Activated CD4-positive, alpha-beta memory T cell treated with anti-CD3 and anti-CD28 coated beads for 36 hours (primary cell): ENCODE measurements at regions of chr10 and their contacts with region 1.

Region 1: GRCh38 chr10:110918643-110919363 is at the start of gene BBIP1:
- DNase-seq: no peak
- H3K4me3 Mint-ChIP-seq: peak within 1 kb of the TSS; percentile 92
- H3K27ac Mint-ChIP-seq: peak within 1 kb of the TSS; percentile 99
- H3K4me1 Mint-ChIP-seq: peaks cover 39% of the 10 kb centered on the region
- H3K27me3 Mint-ChIP-seq: no peaks in the 10 kb centered on the region
- total RNA-seq, gene BBIP1: 36.4 to 43.9 TPM

Region 2: GRCh38 chr10:110304780-110305421 is 613.9 kb before region 1 on chr10 and contains the start of gene SMNDC1:
- CTCF ChIA-PET with region 1: no interaction called
- POLR2A ChIA-PET with region 1: no interaction called
- intact Hi-C with region 1: loop called (anchors 1 kb)
- DNase-seq: peak; percentile 99
- H3K4me3 Mint-ChIP-seq: peak within 1 kb of the TSS; percentile 93
- H3K27ac Mint-ChIP-seq: peak within 1 kb of the TSS; percentile 97
- H3K4me1 Mint-ChIP-seq: peaks cover 49% of the 10 kb centered on the region
- H3K27me3 Mint-ChIP-seq: no peaks in the 10 kb centered on the region
- total RNA-seq, gene SMNDC1: 44.1 to 48.3 TPM

Region 3: GRCh38 chr10:110556969-110557601 is 361.7 kb before region 1 on chr10:
- CTCF ChIA-PET with region 1: no interaction called
- POLR2A ChIA-PET with region 1: no interaction called
- intact Hi-C with region 1: no loop called
- DNase-seq: peak; percentile 80
- H3K4me3 Mint-ChIP-seq: no peak overlapping the region
- H3K27ac Mint-ChIP-seq: no peak overlapping the region
- H3K4me1 Mint-ChIP-seq: peaks cover 2% of the 10 kb centered on the region
- H3K27me3 Mint-ChIP-seq: peaks cover under 1% of the 10 kb centered on the region

Region 4: DNA sequence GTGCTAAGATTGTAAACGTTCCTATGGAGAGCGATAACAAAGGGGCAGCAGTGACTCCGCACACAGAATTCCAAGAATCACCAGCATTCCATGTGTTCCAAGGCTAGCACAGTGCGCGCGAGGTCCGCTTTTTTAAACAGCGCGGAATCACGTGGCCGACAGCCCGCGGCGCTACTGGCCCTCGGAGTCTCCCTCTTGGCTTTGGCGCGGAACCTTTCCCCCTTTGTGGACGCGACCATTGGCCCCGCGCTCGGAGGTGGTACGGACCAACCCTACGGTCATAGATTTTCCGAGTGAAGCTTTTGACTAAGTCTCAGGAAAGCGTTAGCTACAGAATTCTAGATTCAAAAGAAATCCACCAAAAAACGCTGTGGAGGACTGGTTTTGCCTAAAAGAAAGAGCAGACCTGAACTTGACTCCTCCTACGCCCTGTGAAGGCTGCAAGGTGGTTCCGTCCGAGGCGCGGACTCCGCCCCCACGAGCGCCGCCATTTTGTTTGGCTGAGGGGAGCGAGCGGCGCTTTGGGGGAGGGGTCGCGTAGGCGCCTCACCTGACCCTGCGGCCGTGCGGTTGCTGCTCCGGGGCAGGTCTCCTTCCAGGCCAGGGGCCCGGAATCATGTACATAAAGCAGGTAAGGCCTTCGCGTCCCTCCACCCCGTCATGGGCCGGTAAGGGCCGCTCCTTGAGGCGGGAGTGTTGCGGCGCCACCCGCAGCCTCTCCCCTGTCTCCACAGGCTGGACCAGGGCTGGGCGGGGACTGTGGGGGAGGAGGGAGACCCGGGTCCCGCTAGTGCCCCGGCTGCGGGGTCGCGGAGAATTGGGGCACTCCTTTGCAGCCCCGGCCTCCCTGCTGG is 351.4 kb before region 1 on chr10 and contains the start of gene SMC3:
- CTCF ChIA-PET with region 1: no interaction called
- POLR2A ChIA-PET with region 1: no interaction called
- intact Hi-C with region 1: loop called (anchors 1 kb)
- DNase-seq: peak; percentile 94
- H3K4me3 Mint-ChIP-seq: peak within 1 kb of the TSS; percentile 93
- H3K27ac Mint-ChIP-seq: peak within 1 kb of the TSS; percentile 97
- H3K4me1 Mint-ChIP-seq: peaks cover 43% of the 10 kb centered on the region
- H3K27me3 Mint-ChIP-seq: peaks cover 10% of the 10 kb centered on the region
- total RNA-seq, gene SMC3: 89.5 to 92.2 TPM

Region 5: GRCh38 chr10:110857265-110858158 is 61.3 kb before region 1 on chr10:
- CTCF ChIA-PET with region 1: no interaction called
- POLR2A ChIA-PET with region 1: interaction called, 11 read pairs
- intact Hi-C with region 1: no loop called
- DNase-seq: peak; percentile 66
- H3K4me3 Mint-ChIP-seq: peak overlapping the region; percentile 25
- H3K27ac Mint-ChIP-seq: peak overlapping the region; percentile 72
- H3K4me1 Mint-ChIP-seq: peaks cover 82% of the 10 kb centered on the region
- H3K27me3 Mint-ChIP-seq: no peaks in the 10 kb centered on the region

Region 6: GRCh38 chr10:110901954-110902819 is 16.6 kb before region 1 on chr10:
- CTCF ChIA-PET with region 1: interaction called, 14 read pairs
- POLR2A ChIA-PET with region 1: interaction called, 11 read pairs
- intact Hi-C with region 1: loop called (anchors 1 kb)
- DNase-seq: peak; percentile 68
- H3K4me3 Mint-ChIP-seq: peak overlapping the region; percentile 6
- H3K27ac Mint-ChIP-seq: peak overlapping the region; percentile 79
- H3K4me1 Mint-ChIP-seq: peaks cover 40% of the 10 kb centered on the region
- H3K27me3 Mint-ChIP-seq: no peaks in the 10 kb centered on the region

Region 7: DNA sequence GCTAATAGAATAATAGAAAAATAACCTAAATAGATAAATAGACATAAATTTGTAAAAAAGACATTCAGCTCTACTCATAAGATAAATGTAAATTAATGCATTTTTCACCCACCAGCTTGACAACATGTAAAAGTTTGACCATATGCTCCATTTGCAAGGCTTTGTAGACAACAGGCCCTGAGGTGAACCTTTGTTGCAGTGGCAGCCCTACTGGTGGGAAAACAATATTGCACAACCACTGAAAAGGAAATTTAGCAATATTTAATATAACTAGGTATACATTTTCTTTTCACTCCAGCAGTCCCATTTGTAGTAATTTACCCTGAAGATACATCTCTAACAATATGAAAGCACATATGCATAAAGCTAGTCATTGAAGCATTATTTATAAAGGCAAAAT is 119.1 kb after region 1 on chr10:
- CTCF ChIA-PET with region 1: no interaction called
- POLR2A ChIA-PET with region 1: no interaction called
- intact Hi-C with region 1: no loop called
- DNase-seq: no peak
- H3K4me3 Mint-ChIP-seq: no peak overlapping the region
- H3K27ac Mint-ChIP-seq: no peak overlapping the region
- H3K4me1 Mint-ChIP-seq: no peaks in the 10 kb centered on the region
- H3K27me3 Mint-ChIP-seq: no peaks in the 10 kb centered on the region

Region 8: GRCh38 chr10:111429340-111430028 is 510.7 kb after region 1 on chr10:
- CTCF ChIA-PET with region 1: no interaction called
- POLR2A ChIA-PET with region 1: no interaction called
- intact Hi-C with region 1: no loop called
- DNase-seq: no peak
- H3K4me3 Mint-ChIP-seq: no peak overlapping the region
- H3K27ac Mint-ChIP-seq: no peak overlapping the region
- H3K4me1 Mint-ChIP-seq: no peaks in the 10 kb centered on the region
- H3K27me3 Mint-ChIP-seq: peaks cover 2% of the 10 kb centered on the region